GM12878 (cell line): ENCODE measurements at regions of chr1 and their contacts with region 1.

Region 1: GRCh38 chr1:9078015-9078750 is 8.7 kb upstream of the SLC2A5 start:
- DNase-seq: peak; percentile 95
- ATAC-seq: peak; percentile 49
- H3K4me3 ChIP-seq: no peak overlapping the region
- H3K27ac ChIP-seq: peak overlapping the region; percentile 45
- H3K4me1 ChIP-seq: peaks cover 55% of the 10 kb centered on the region
- H3K27me3 ChIP-seq: no peaks in the 10 kb centered on the region
- CTCF ChIP-seq: no peak
- EP300 ChIP-seq: peak; percentile 83 to 94; a peak in 3 of 4 replicates
- POLR2A ChIP-seq: no peak
- RAD21 ChIP-seq: no peak

Region 2: GRCh38 chr1:8878448-8879347 is 199.5 kb before region 1 on chr1 and contains the start of gene ENO1:
- CTCF ChIA-PET with region 1: interaction called, 3 read pairs
- POLR2A ChIA-PET with region 1: interaction called, 3 read pairs
- RAD21 ChIA-PET with region 1: no interaction called
- SMC1A ChIA-PET with region 1: no interaction called
- in situ Hi-C with region 1: no loop called
- intact Hi-C with region 1: loop called (anchors 5 kb)
- DNase-seq: peak; percentile 98
- ATAC-seq: peak; percentile 80
- H3K4me3 ChIP-seq: peak within 1 kb of the TSS; percentile 89
- H3K27ac ChIP-seq: peak within 1 kb of the TSS; percentile 99
- H3K4me1 ChIP-seq: peaks cover 15% of the 10 kb centered on the region
- H3K27me3 ChIP-seq: no peaks in the 10 kb centered on the region
- CTCF ChIP-seq: no peak
- EP300 ChIP-seq: 0 out of 4 replicates have a peak, but pooled peaks have one; percentile 6 to 8
- POLR2A ChIP-seq: peak; percentile 95
- RAD21 ChIP-seq: no peak
- polyA plus RNA-seq, gene ENO1: 3,300 to 4,219 TPM

Region 3: DNA sequence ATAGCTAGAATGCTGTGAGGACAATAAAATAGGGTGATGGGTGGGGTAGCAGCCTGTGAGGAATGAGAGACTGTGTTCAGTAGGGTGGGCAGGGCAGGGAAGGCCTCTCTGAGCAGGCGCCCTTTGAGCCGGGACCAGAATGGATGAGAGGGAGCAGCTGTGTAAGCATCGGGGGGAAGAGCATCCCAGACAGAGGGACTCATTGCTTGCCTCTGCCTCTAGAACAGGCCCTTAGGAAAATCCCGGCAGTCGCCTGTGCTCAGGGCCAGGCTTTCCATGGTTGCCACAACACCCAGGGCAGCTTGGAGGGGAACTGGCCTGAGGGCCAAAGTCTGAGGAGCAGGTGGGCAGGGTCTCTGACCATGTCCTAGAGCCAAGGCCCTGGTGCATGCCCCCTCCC is 52.7 kb before region 1 on chr1:
- CTCF ChIA-PET with region 1: no interaction called
- POLR2A ChIA-PET with region 1: no interaction called
- RAD21 ChIA-PET with region 1: no interaction called
- SMC1A ChIA-PET with region 1: no interaction called
- in situ Hi-C with region 1: no loop called
- intact Hi-C with region 1: no loop called
- DNase-seq: no peak
- ATAC-seq: no peak
- H3K4me3 ChIP-seq: no peak overlapping the region
- H3K27ac ChIP-seq: no peak overlapping the region
- H3K4me1 ChIP-seq: no peaks in the 10 kb centered on the region
- H3K27me3 ChIP-seq: no peaks in the 10 kb centered on the region
- CTCF ChIP-seq: no peak
- EP300 ChIP-seq: no peak
- POLR2A ChIP-seq: no peak
- RAD21 ChIP-seq: no peak

Region 4: DNA sequence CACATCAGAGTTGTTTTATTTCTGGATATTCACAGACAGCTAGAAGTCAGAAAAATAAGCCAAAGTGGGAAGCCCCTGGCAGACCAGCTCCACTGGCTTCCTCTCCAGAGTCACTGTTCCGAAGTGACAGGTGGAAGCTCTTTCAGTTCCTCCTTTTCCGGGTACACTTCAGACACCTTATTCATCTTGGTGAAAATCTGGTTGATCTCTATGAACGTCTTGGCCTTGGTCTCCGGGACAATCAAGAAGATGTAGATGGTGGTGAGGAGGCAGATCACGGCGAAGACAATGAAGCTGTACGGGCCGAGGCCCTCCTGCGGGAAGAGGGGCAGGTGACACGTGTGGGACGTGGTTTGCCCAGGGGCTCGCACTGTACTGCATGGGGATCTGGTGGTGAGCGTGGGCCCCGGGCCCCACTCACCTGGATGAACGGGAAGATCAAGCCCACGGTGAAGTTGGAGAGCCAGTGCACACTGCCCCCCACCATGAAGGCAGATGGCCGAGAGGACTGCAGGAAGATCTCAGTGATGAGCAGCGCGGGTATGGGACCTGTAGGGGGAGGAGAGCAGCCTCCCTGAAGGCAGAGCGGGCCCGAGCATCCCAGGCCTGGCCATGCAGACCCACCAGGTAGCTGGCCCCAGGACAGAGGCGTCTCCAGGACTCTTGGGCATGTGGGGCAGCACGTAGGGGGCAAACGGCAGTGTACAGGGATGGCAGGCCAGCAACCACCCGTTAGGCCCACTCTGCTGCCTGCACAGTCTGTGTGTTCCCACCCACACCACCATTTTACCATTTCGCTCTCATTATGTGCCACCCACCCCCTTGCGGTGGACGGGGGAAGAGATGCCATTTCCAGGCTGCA is 40.5 kb before region 1 on chr1:
- CTCF ChIA-PET with region 1: no interaction called
- POLR2A ChIA-PET with region 1: interaction called, 3 read pairs
- RAD21 ChIA-PET with region 1: no interaction called
- SMC1A ChIA-PET with region 1: interaction called, 4 read pairs
- in situ Hi-C with region 1: no loop called
- intact Hi-C with region 1: loop called (anchors 2 kb)
- DNase-seq: peak; percentile 56
- ATAC-seq: peak; percentile 89
- H3K4me3 ChIP-seq: no peak overlapping the region
- H3K27ac ChIP-seq: peak overlapping the region; percentile 89
- H3K4me1 ChIP-seq: peaks cover 27% of the 10 kb centered on the region
- H3K27me3 ChIP-seq: no peaks in the 10 kb centered on the region
- CTCF ChIP-seq: no peak
- EP300 ChIP-seq: peak; percentile 50 to 76; a peak in 3 of 4 replicates
- POLR2A ChIP-seq: peak; percentile 30; the same call in 1 of the 2 replicates
- RAD21 ChIP-seq: no peak

Region 5: GRCh38 chr1:9061252-9061960 is 16.8 kb before region 1 on chr1:
- CTCF ChIA-PET with region 1: interaction called, 19 read pairs
- POLR2A ChIA-PET with region 1: interaction called, 45 read pairs
- RAD21 ChIA-PET with region 1: interaction called, 15 read pairs
- SMC1A ChIA-PET with region 1: interaction called, 59 read pairs
- in situ Hi-C with region 1: no loop called
- intact Hi-C with region 1: no loop called
- DNase-seq: no peak
- ATAC-seq: peak; percentile 64
- H3K4me3 ChIP-seq: no peak overlapping the region
- H3K27ac ChIP-seq: peak overlapping the region; percentile 2; the same call in 1 of the 2 replicates
- H3K4me1 ChIP-seq: peaks cover 24% of the 10 kb centered on the region
- H3K27me3 ChIP-seq: no peaks in the 10 kb centered on the region
- CTCF ChIP-seq: no peak
- EP300 ChIP-seq: no peak
- POLR2A ChIP-seq: no peak
- RAD21 ChIP-seq: no peak

Region 6: GRCh38 chr1:9093581-9093980 is 15.4 kb after region 1 on chr1:
- CTCF ChIA-PET with region 1: interaction called, 5 read pairs
- POLR2A ChIA-PET with region 1: interaction called, 12 read pairs
- RAD21 ChIA-PET with region 1: interaction called, 3 read pairs
- SMC1A ChIA-PET with region 1: interaction called, 15 read pairs
- in situ Hi-C with region 1: no loop called
- intact Hi-C with region 1: no loop called
- DNase-seq: no peak
- ATAC-seq: no peak
- H3K4me3 ChIP-seq: no peak overlapping the region
- H3K27ac ChIP-seq: no peak overlapping the region
- H3K4me1 ChIP-seq: no peaks in the 10 kb centered on the region
- H3K27me3 ChIP-seq: no peaks in the 10 kb centered on the region; a peak in 2 of 4 replicates
- CTCF ChIP-seq: no peak
- EP300 ChIP-seq: no peak
- POLR2A ChIP-seq: no peak
- RAD21 ChIP-seq: no peak

Region 7: GRCh38 chr1:9413148-9413876 is 335.1 kb after region 1 on chr1:
- CTCF ChIA-PET with region 1: no interaction called
- POLR2A ChIA-PET with region 1: no interaction called
- RAD21 ChIA-PET with region 1: no interaction called
- SMC1A ChIA-PET with region 1: no interaction called
- in situ Hi-C with region 1: no loop called
- intact Hi-C with region 1: loop called (anchors 5 kb)
- DNase-seq: peak; percentile 89
- ATAC-seq: peak; percentile 91
- H3K4me3 ChIP-seq: peak overlapping the region; percentile 26; the same call in 1 of the 2 replicates
- H3K27ac ChIP-seq: peak overlapping the region; percentile 90
- H3K4me1 ChIP-seq: peaks cover 56% of the 10 kb centered on the region
- H3K27me3 ChIP-seq: no peaks in the 10 kb centered on the region
- CTCF ChIP-seq: no peak
- EP300 ChIP-seq: peak; percentile 66 to 87
- POLR2A ChIP-seq: peak; percentile 59
- RAD21 ChIP-seq: 0 out of 2 replicates have a peak, but pooled peaks have one; percentile 23